Mammary epithelial cell (primary cell): ENCODE measurements at regions of chr1 and their contacts with region 1.

Region 1: GRCh38 chr1:153768316-153769181 is 6.7 kb upstream of the SLC27A3 start:
- DNase-seq: no peak
- H3K4me3 ChIP-seq: no peak overlapping the region
- H3K27ac ChIP-seq: no peak overlapping the region
- H3K4me1 ChIP-seq: no peaks in the 10 kb centered on the region
- H3K27me3 ChIP-seq: no peaks in the 10 kb centered on the region
- CTCF ChIP-seq: no peak

Region 2: DNA sequence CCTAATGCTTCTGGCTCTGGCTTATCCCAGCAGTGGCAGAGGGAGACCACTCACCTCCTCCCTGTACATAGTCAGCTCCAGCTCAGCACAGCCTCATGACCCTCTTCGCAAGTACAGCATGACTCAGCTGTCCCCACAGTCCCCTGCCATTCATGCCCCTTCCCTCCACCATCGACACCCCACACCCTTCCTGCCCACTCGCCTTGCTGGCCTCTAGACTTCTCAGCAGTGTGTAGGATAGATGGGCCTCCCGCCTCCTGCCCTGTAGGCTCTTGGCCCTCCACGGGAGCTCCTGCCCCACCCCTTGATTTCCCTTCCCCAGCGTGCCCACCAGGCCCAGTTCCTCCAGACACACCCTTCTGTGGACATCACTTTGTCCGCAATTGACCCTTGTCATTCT is 80.3 kb before region 1 on chr1:
- CTCF ChIA-PET with region 1: no interaction called
- dilution Hi-C with region 1: loop called (anchors 5 kb)
- in situ Hi-C with region 1: no loop called
- intact Hi-C with region 1: no loop called
- DNase-seq: no peak
- H3K4me3 ChIP-seq: no peak overlapping the region
- H3K27ac ChIP-seq: no peak overlapping the region
- H3K4me1 ChIP-seq: no peaks in the 10 kb centered on the region
- H3K27me3 ChIP-seq: no peaks in the 10 kb centered on the region
- CTCF ChIP-seq: no peak